Aorta (tissue), 5 donors: ENCODE measurements at regions of chr18 and their contacts with region 1.

Region 1: GRCh38 chr18:22813648-22814328 is 119.3 kb upstream of the RBBP8 start:
- DNase-seq: no peak
- ATAC-seq: no peak
- H3K4me3 ChIP-seq: no peak overlapping the region
- H3K27ac ChIP-seq: no peak overlapping the region
- H3K4me1 ChIP-seq: no peaks in the 10 kb centered on the region
- H3K27me3 ChIP-seq: no peaks in the 10 kb centered on the region

Region 2: GRCh38 chr18:22983175-22983574 is 169.4 kb after region 1 on chr18:
- intact Hi-C with region 1: loop called in 1 of 2 experiments (anchors 10 kb)
- DNase-seq: no peak
- ATAC-seq: no peak
- H3K4me3 ChIP-seq: no peak overlapping the region
- H3K27ac ChIP-seq: no peak overlapping the region
- H3K4me1 ChIP-seq: no peaks in the 10 kb centered on the region
- H3K27me3 ChIP-seq: no peaks in the 10 kb centered on the region